Activated CD8-positive, alpha-beta memory T cell treated with anti-CD3 and anti-CD28 coated beads, Interleukin-2, amount 10 ng/mL, durations not matched to agents 7 days and 5 days (primary cell): ENCODE measurements at regions of chr20 and their contacts with region 1.

Region 1: GRCh38 chr20:45987108-45987780 is 15.2 kb upstream of the ZNF335 start:
- DNase-seq: peak; percentile 84
- ATAC-seq: peak; percentile 97
- H3K4me3 Mint-ChIP-seq: no peak overlapping the region
- H3K27ac Mint-ChIP-seq: no peak overlapping the region
- H3K4me1 Mint-ChIP-seq: peaks cover 15% of the 10 kb centered on the region
- H3K27me3 Mint-ChIP-seq: peaks cover 25% of the 10 kb centered on the region

Region 2: DNA sequence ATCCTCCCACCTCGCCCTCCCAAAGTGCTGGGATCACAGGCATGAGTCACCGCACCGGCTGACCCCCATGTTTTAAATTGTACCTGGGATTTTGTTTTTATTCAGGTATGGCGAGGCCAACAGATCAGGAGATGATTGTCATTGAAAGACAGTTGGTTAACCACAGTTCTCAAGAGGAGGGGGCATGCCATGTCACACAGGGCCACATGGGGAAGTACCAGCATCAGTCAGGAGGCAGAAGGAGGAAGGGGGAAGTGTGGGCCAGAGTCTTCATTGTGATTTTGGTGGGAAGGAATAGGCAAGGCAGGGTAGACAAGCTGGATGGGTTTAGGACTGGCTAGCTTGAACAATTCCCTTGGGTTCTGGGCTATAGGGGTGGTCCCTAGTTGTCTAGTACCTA is 11.5 kb after region 1 on chr20:
- CTCF ChIA-PET with region 1: interaction called, 289 read pairs
- DNase-seq: peak; percentile 50
- ATAC-seq: peak; percentile 63
- H3K4me3 Mint-ChIP-seq: no peak overlapping the region
- H3K27ac Mint-ChIP-seq: no peak overlapping the region
- H3K4me1 Mint-ChIP-seq: peaks cover 40% of the 10 kb centered on the region
- H3K27me3 Mint-ChIP-seq: peaks cover 19% of the 10 kb centered on the region

Region 3: DNA sequence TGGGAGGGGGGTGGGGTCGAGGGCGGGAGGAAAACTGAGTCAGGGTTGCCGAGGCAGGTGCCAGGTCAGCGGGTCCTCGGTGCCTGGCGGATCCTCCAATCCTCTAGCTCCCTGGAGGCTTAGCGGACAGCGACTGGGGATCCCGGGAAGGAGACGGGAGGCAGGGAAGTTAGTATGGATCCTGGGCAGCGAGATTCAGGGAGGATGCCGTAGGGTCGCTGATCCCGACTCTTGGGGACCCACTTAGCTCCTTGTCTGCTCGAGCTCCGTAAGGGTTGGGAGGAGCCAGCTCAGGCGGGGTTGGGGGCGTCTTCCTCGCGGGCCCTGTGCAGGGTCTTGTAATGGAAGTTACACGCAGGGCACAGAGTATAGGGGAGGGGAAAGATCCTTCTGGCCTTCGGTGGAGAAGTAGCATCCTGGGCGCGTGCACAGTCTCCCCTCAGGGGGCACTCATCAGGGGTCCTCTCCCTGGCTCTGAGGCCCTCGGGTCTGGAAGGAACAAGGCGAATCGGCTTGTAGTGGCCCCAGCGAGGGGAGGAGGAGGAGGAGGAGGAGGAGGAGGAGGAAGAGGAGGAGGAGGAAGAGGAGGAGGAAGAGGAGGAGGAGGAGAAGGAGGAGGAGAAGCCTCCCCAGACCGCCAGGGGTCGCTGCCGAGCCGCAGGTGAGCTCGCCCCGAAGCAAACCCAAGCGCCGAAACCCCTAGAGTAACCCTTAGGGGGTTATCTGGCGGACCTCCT is 35.3 kb after region 1 on chr20:
- CTCF ChIA-PET with region 1: interaction called, 14 read pairs
- DNase-seq: peak; percentile 82
- ATAC-seq: peak; percentile 61
- H3K4me3 Mint-ChIP-seq: peak overlapping the region; percentile 70
- H3K27ac Mint-ChIP-seq: no peak overlapping the region
- H3K4me1 Mint-ChIP-seq: peaks cover 19% of the 10 kb centered on the region
- H3K27me3 Mint-ChIP-seq: peaks cover 46% of the 10 kb centered on the region